ENCODE measurements at regions of chr17 and their contacts with region 1.

Region 1: DNA sequence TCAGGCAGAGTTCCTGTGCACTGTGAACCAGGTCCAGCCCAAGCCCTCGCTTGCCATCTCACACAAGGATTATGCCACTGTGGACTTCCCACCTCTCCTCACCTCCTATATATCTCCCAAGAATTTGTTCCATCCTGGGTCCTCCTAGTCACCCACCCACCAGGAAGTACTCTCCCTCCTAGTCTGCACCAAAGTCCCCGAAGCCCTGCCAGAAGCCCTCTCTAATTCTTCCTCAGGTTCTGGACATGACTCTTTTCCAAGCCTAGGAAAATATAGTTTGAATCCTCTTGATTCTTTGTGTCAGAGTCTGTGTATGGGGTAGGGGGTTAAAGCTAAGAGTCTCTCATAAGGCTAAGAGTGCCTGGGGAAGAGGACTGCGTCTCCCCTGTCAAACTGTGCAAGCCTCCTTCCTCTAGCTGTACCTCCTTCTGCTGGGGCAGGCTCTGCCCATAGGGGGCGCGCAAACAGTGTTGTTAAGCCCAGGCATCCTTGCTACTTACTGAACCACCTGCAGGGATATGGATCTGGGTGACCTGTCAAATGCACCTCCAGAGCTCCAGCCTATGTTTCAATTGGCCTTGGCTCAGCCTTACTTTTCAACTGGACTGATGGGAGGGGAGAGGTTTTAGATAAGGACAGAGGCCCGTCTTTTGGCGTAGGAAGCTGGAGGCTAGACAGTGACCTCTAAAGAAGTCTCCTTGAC is 16.6 kb upstream of the DLX4 start:
- DNase-seq: peak; percentile 96 to 98
- H3K4me3 ChIP-seq: no peak overlapping the region
- H3K4me3 Mint-ChIP-seq: no peak overlapping the region
- H3K27ac Mint-ChIP-seq: peak overlapping the region; percentile 7
- H3K4me1 ChIP-seq: peaks cover 7% of the 10 kb centered on the region
- H3K4me1 Mint-ChIP-seq: peaks cover 25% of the 10 kb centered on the region
- H3K27me3 ChIP-seq: no peaks in the 10 kb centered on the region
- H3K27me3 Mint-ChIP-seq: no peaks in the 10 kb centered on the region
- CTCF ChIP-seq: peak; percentile 99 to 100

Region 2: GRCh38 chr17:49624896-49625295 is 327.5 kb before region 1 on chr17:
- CTCF ChIA-PET with region 1: no interaction called
- POLR2A ChIA-PET with region 1: no interaction called
- intact Hi-C with region 1: no loop called
- DNase-seq: no peak
- H3K4me3 ChIP-seq: no peak overlapping the region
- H3K4me3 Mint-ChIP-seq: no peak overlapping the region
- H3K27ac Mint-ChIP-seq: no peak overlapping the region
- H3K4me1 ChIP-seq: peaks cover 23% of the 10 kb centered on the region
- H3K4me1 Mint-ChIP-seq: peaks cover 24% of the 10 kb centered on the region
- H3K27me3 ChIP-seq: no peaks in the 10 kb centered on the region
- H3K27me3 Mint-ChIP-seq: no peaks in the 10 kb centered on the region
- CTCF ChIP-seq: no peak

Region 3: DNA sequence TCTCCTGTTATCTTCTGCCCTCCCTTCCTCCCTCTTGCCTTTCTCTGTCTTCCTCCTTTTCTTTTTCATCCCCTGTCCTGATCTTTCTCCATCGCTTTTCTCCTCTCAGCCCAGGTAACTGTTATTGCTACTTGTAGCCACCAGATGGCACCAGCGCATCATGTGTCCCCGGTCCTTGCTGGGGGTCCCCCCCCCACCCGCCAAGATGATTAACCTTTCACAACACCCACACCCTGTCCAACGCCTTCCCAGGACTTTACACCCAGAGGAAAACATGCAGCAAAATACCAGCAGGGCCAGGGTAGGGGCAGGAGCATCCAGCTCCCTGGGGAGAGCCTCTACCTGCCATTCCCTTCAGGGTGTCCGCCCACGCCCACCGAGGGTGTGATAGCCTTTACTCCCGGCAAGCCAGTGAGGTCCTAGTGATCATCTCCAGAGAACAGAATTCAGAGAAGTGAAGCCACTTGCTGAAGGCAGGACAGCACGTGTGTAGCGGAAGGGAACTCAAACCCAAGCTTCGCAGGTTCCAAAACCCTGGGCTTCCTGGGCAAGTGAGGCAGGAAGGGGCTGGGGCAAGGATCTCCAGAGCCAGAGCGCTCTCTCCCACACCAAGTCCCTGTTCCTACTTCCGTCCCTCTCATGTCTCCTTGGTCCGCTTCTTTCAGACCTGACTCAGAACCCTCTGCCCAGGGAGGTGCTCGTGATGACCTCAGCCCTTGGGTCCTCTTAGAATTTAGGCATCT is 91.0 kb before region 1 on chr17:
- CTCF ChIA-PET with region 1: interaction called, 7 read pairs
- POLR2A ChIA-PET with region 1: no interaction called
- intact Hi-C with region 1: loop called (anchors 2 kb)
- DNase-seq: peak; percentile 91 to 95
- H3K4me3 ChIP-seq: no peak overlapping the region
- H3K4me3 Mint-ChIP-seq: no peak overlapping the region
- H3K27ac Mint-ChIP-seq: no peak overlapping the region
- H3K4me1 ChIP-seq: peaks cover 26% of the 10 kb centered on the region
- H3K4me1 Mint-ChIP-seq: peaks cover 20% of the 10 kb centered on the region
- H3K27me3 ChIP-seq: no peaks in the 10 kb centered on the region
- H3K27me3 Mint-ChIP-seq: no peaks in the 10 kb centered on the region
- CTCF ChIP-seq: peak; percentile 99 to 100

Region 4: DNA sequence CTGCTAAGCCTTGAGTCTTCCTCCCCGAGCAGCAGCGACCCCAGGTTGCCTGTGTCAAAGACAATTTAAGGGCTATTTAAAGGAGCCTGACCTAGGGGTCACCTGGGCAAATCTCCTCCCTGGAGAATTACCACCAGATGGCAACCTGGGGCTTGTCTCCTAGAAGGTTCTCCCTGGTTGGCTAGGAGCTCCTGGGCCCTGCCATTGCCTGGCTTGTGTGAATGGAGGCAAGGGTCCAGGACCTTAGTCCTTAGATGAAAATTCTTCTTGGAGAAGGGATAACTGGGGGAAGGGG is 53.2 kb before region 1 on chr17:
- CTCF ChIA-PET with region 1: interaction called, 24 read pairs
- POLR2A ChIA-PET with region 1: interaction called, 11 read pairs
- intact Hi-C with region 1: loop called (anchors 1 kb)
- DNase-seq: peak; percentile 88 to 92
- H3K4me3 ChIP-seq: no peak overlapping the region
- H3K4me3 Mint-ChIP-seq: no peak overlapping the region
- H3K27ac Mint-ChIP-seq: peak overlapping the region; percentile 58
- H3K4me1 ChIP-seq: peaks cover 83% of the 10 kb centered on the region
- H3K4me1 Mint-ChIP-seq: peaks cover 60% of the 10 kb centered on the region
- H3K27me3 ChIP-seq: no peaks in the 10 kb centered on the region
- H3K27me3 Mint-ChIP-seq: no peaks in the 10 kb centered on the region
- CTCF ChIP-seq: peak; percentile 83 to 95

Region 5: GRCh38 chr17:49939318-49939717 is 13.0 kb before region 1 on chr17:
- CTCF ChIA-PET with region 1: interaction called, 45 read pairs
- POLR2A ChIA-PET with region 1: no interaction called
- intact Hi-C with region 1: no loop called
- DNase-seq: no peak
- H3K4me3 ChIP-seq: no peak overlapping the region
- H3K4me3 Mint-ChIP-seq: no peak overlapping the region
- H3K27ac Mint-ChIP-seq: no peak overlapping the region
- H3K4me1 ChIP-seq: peaks cover 35% of the 10 kb centered on the region
- H3K4me1 Mint-ChIP-seq: peaks cover 21% of the 10 kb centered on the region
- H3K27me3 ChIP-seq: no peaks in the 10 kb centered on the region
- H3K27me3 Mint-ChIP-seq: no peaks in the 10 kb centered on the region
- CTCF ChIP-seq: no peak

Region 6: GRCh38 chr17:49976163-49976827 is 23.9 kb after region 1 on chr17:
- CTCF ChIA-PET with region 1: interaction called, 13 read pairs
- POLR2A ChIA-PET with region 1: no interaction called
- intact Hi-C with region 1: no loop called
- DNase-seq: peak; percentile 58 to 87
- H3K4me3 ChIP-seq: no peak overlapping the region
- H3K4me3 Mint-ChIP-seq: no peak overlapping the region
- H3K27ac Mint-ChIP-seq: no peak overlapping the region
- H3K4me1 ChIP-seq: peaks cover 41% of the 10 kb centered on the region
- H3K4me1 Mint-ChIP-seq: peaks cover 27% of the 10 kb centered on the region
- H3K27me3 ChIP-seq: no peaks in the 10 kb centered on the region
- H3K27me3 Mint-ChIP-seq: no peaks in the 10 kb centered on the region
- CTCF ChIP-seq: no peak

Region 7: DNA sequence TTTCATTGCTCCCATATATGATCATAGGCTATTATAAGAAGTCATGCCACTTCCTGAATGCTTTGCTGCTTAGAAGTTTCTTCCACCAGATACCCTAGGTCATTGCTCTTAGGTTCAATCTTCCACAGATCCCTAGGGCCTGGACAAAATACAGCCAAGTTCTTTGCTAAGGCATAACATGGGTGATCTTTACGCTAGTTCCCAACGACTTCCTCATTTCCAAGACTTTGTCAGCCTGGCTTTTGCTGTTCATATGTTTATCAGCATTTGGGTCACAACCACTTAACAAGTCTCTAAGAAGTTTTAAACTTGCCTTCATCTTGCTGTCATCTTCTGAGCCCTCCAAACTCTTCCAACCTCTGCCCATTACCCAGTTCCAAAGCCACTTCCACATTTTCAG is 62.8 kb after region 1 on chr17:
- CTCF ChIA-PET with region 1: no interaction called
- POLR2A ChIA-PET with region 1: no interaction called
- intact Hi-C with region 1: no loop called
- DNase-seq: no peak
- H3K4me3 ChIP-seq: no peak overlapping the region
- H3K4me3 Mint-ChIP-seq: no peak overlapping the region
- H3K27ac Mint-ChIP-seq: no peak overlapping the region
- H3K4me1 ChIP-seq: no peaks in the 10 kb centered on the region
- H3K4me1 Mint-ChIP-seq: no peaks in the 10 kb centered on the region
- H3K27me3 ChIP-seq: no peaks in the 10 kb centered on the region
- H3K27me3 Mint-ChIP-seq: no peaks in the 10 kb centered on the region
- CTCF ChIP-seq: no peak

Region 8: DNA sequence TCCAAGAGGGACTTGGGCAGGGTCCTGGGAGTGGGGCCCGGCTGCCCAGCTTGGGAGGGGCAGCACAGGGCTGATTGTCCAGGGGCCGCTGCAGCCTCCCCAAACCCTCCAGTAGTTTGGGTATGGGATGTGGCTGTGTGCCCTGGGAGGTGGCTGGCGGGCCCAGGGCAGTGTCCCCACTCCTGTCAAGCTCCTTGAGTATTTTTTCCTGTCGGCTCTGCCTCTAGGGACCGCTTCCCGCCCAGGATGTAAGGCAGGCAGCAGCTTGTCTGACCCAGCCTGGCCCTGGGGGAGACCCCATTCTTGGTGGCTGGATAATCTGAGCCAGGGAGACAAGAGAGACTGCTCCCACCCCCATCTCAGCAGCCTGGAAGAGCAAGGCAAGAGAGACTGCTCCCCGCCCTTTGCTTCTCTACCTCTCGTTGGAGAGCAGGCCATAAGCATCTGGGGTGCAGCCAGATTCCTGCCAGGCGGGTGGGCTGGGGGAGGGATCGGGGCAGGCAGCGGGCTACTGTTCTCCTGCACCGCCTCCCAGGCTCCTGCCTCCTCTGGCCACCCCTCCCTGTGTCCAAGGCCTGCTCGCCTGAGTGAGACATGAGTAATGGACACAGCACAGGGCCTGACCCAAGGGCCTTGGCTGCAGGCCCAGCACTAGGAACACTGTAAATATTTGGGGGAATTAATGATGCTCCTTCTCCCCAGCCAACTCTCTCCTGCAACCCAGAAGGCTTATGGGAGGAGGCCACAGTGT is 85.1 kb after region 1 on chr17:
- CTCF ChIA-PET with region 1: no interaction called
- POLR2A ChIA-PET with region 1: no interaction called
- intact Hi-C with region 1: no loop called
- DNase-seq: no peak
- H3K4me3 ChIP-seq: no peak overlapping the region
- H3K4me3 Mint-ChIP-seq: no peak overlapping the region
- H3K27ac Mint-ChIP-seq: no peak overlapping the region
- H3K4me1 ChIP-seq: peaks cover 6% of the 10 kb centered on the region; the same call in 1 of the 2 replicates
- H3K4me1 Mint-ChIP-seq: peaks cover 15% of the 10 kb centered on the region
- H3K27me3 ChIP-seq: no peaks in the 10 kb centered on the region
- H3K27me3 Mint-ChIP-seq: no peaks in the 10 kb centered on the region
- CTCF ChIP-seq: no peak

Region 9: DNA sequence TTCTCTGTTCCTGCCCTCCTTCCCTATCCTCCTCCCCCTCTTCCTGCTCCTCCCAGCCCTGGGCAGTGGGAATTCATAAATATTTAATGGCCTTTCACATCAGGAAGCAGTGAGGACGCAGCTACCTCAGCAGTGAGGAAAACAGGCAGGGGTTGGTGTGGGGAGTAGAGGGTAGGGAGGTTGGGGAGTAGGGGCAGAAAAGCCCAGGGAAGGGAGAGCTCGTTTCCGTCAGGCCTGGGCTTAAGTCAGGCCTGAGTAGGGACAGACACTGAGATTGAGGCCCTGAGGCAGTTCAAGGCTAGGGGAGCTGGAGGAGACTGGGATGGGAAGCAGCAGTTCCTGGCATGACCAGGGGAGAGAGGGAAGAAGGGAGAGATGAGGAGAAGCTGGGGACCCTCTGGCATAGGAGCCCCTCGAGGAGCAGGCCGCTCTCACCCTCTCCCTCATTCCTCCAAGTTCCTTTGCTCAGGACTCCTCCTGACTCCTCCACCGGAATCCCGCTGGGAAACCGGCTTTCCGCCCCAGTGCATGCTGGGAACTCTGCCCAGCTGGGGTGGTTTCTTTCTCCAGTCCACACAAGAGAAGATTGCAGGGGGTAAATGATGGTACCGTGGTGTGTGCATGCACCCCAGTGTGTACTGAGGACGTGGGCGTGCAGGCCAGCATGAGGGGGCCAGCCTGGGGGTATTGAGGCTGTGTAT is 171.4 kb after region 1 on chr17:
- CTCF ChIA-PET with region 1: interaction called, 11 read pairs
- POLR2A ChIA-PET with region 1: no interaction called
- intact Hi-C with region 1: no loop called
- DNase-seq: peak; percentile 42 to 48
- H3K4me3 ChIP-seq: no peak overlapping the region
- H3K4me3 Mint-ChIP-seq: no peak overlapping the region
- H3K27ac Mint-ChIP-seq: no peak overlapping the region
- H3K4me1 ChIP-seq: peaks cover 10% of the 10 kb centered on the region
- H3K4me1 Mint-ChIP-seq: peaks cover 11% of the 10 kb centered on the region
- H3K27me3 ChIP-seq: no peaks in the 10 kb centered on the region
- H3K27me3 Mint-ChIP-seq: no peaks in the 10 kb centered on the region
- CTCF ChIP-seq: no peak